ENCODE measurements at regions of chr2 and their contacts with region 1.

Region 1: GRCh38 chr2:72579591-72580180 is 246.1 kb downstream of the EXOC6B start:
- DNase-seq: no peak
- H3K4me3 ChIP-seq: no peak overlapping the region
- H3K27ac ChIP-seq: no peak overlapping the region
- H3K4me1 ChIP-seq: peaks cover 0 to 14% (median 0%) of the 10 kb centered on the region in 4 donors
- H3K27me3 ChIP-seq: no peaks in the 10 kb centered on the region
- CTCF ChIP-seq: peak; percentile 21 to 52 (median 40)
- EP300 ChIP-seq: no peak
- POLR2A ChIP-seq: no peak

Region 2: GRCh38 chr2:71545572-71546274 is 1034.0 kb before region 1 on chr2:
- intact Hi-C with region 1: loop called (anchors 2 kb)
- DNase-seq: peak; percentile 70
- H3K4me3 ChIP-seq: no peak overlapping the region
- H3K27ac ChIP-seq: no peak overlapping the region
- H3K4me1 ChIP-seq: no peaks in the 10 kb centered on the region
- H3K27me3 ChIP-seq: no peaks in the 10 kb centered on the region
- CTCF ChIP-seq: peak; percentile 28 to 61 (median 46)
- EP300 ChIP-seq: no peak
- POLR2A ChIP-seq: no peak

Region 3: GRCh38 chr2:71923887-71924533 is 655.7 kb before region 1 on chr2:
- intact Hi-C with region 1: loop called (anchors 10 kb)
- DNase-seq: no peak
- H3K4me3 ChIP-seq: no peak overlapping the region
- H3K27ac ChIP-seq: peak overlapping the region in 1 of 4 donors; percentile 74
- H3K4me1 ChIP-seq: peaks cover 0 to 28% (median 21%) of the 10 kb centered on the region in 4 donors
- H3K27me3 ChIP-seq: no peaks in the 10 kb centered on the region
- CTCF ChIP-seq: peak; percentile 65 to 88 (median 74)
- EP300 ChIP-seq: no peak
- POLR2A ChIP-seq: no peak

Region 4: GRCh38 chr2:72427022-72427861 is 152.4 kb before region 1 on chr2:
- intact Hi-C with region 1: no loop called
- DNase-seq: no peak
- H3K4me3 ChIP-seq: no peak overlapping the region
- H3K27ac ChIP-seq: no peak overlapping the region
- H3K4me1 ChIP-seq: no peaks in the 10 kb centered on the region
- H3K27me3 ChIP-seq: no peaks in the 10 kb centered on the region
- CTCF ChIP-seq: no peak
- EP300 ChIP-seq: no peak
- POLR2A ChIP-seq: no peak

Measured in sigmoid colon (tissue), 7 donors.